CD4-positive, alpha-beta memory T cell (primary cell): ENCODE measurements at regions of chr10 and their contacts with region 1.

Region 1: GRCh38 chr10:93496322-93497041 is at the start of gene CEP55:
- DNase-seq: peak; percentile 93 to 97 (median 94)
- H3K4me3 ChIP-seq: peak within 1 kb of the TSS; percentile 83 to 94
- H3K4me3 Mint-ChIP-seq: peak within 1 kb of the TSS; percentile 92 to 95 (median 93)
- H3K27ac ChIP-seq: peak within 1 kb of the TSS; percentile 37
- H3K27ac Mint-ChIP-seq: peak within 1 kb of the TSS; percentile 54 to 92 (median 89)
- H3K4me1 ChIP-seq: peaks cover 23% of the 10 kb centered on the region
- H3K4me1 Mint-ChIP-seq: peaks cover 13 to 23% (median 19%) of the 10 kb centered on the region in 4 donors
- H3K27me3 ChIP-seq: no peaks in the 10 kb centered on the region
- H3K27me3 Mint-ChIP-seq: no peaks in the 10 kb centered on the region
- total RNA-seq, gene CEP55: 0.17 to 0.30 TPM

Region 2: GRCh38 chr10:93413252-93413689 is 83.2 kb before region 1 on chr10:
- CTCF ChIA-PET with region 1: interaction called, 3 read pairs
- POLR2A ChIA-PET with region 1: interaction called, 10 read pairs
- intact Hi-C with region 1: no loop called
- DNase-seq: peak; percentile 53 to 66 (median 64)
- H3K4me3 ChIP-seq: peak overlapping the region in 1 of 2 donors; percentile 33
- H3K4me3 Mint-ChIP-seq: peak overlapping the region; percentile 5 to 88 (median 67)
- H3K27ac ChIP-seq: peak overlapping the region; percentile 48
- H3K27ac Mint-ChIP-seq: peak overlapping the region; percentile 79 to 98 (median 94)
- H3K4me1 ChIP-seq: peaks cover 60% of the 10 kb centered on the region
- H3K4me1 Mint-ChIP-seq: peaks cover 47 to 83% (median 70%) of the 10 kb centered on the region in 4 donors
- H3K27me3 ChIP-seq: no peaks in the 10 kb centered on the region
- H3K27me3 Mint-ChIP-seq: no peaks in the 10 kb centered on the region

Region 3: DNA sequence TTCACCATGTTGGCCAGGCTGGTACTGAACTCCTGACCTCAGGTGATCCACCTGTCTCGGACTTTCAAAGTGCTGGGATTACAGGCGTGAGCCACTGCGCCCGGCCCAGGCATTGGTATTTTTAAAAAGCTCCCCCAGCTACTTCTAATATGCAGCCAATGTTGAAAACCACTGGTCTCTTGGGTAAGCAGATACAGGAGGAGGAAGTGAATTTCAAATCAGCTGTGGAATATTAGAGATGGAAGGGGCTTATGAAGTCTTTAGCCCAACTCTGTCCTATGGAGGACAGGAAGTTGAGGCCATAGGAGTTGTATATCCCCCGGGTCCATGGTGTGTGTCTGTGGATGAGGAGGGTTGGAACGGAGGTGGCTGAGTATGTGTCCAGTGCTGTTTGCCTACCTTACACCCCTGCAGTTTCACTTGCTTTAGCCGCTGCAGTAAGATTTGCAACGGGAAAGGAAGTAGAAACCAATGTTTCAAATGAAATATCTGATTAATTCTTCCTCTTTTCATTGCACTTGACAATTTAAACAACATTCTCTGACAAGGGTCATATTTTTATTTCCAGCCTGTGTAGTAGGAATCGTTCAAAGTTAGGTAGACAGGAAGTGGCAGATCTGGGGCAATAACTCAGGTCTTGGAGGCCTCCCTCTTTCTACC is 119.2 kb after region 1 on chr10:
- CTCF ChIA-PET with region 1: no interaction called
- POLR2A ChIA-PET with region 1: no interaction called
- intact Hi-C with region 1: no loop called
- DNase-seq: no peak
- H3K4me3 ChIP-seq: no peak overlapping the region
- H3K4me3 Mint-ChIP-seq: peak overlapping the region in 1 of 8 donors; percentile 23
- H3K27ac ChIP-seq: no peak overlapping the region
- H3K27ac Mint-ChIP-seq: no peak overlapping the region
- H3K4me1 ChIP-seq: no peaks in the 10 kb centered on the region
- H3K4me1 Mint-ChIP-seq: peaks cover 0 to 4% (median 0%) of the 10 kb centered on the region in 4 donors
- H3K27me3 ChIP-seq: no peaks in the 10 kb centered on the region
- H3K27me3 Mint-ChIP-seq: peaks cover 2 to 5% of the 10 kb centered on the region in 2 donors